Mammary epithelial cell (primary cell): ENCODE measurements at regions of chr2 and their contacts with region 1.

Region 1: GRCh38 chr2:187842978-187843847 is 289.0 kb upstream of the TFPI start:
- DNase-seq: peak; percentile 35
- H3K4me3 ChIP-seq: no peak overlapping the region
- H3K27ac ChIP-seq: no peak overlapping the region
- H3K4me1 ChIP-seq: no peaks in the 10 kb centered on the region
- H3K27me3 ChIP-seq: no peaks in the 10 kb centered on the region
- CTCF ChIP-seq: peak; percentile 46 to 67

Region 2: GRCh38 chr2:187581125-187581896 is 261.9 kb before region 1 on chr2:
- CTCF ChIA-PET with region 1: no interaction called
- dilution Hi-C with region 1: loop called (anchors 5 kb)
- in situ Hi-C with region 1: loop called in 1 of 2 experiments (anchors 25 kb)
- intact Hi-C with region 1: loop called (anchors 1 kb)
- DNase-seq: peak; percentile 27
- H3K4me3 ChIP-seq: peak overlapping the region in 1 of 3 experiments; percentile 40
- H3K27ac ChIP-seq: no peak overlapping the region
- H3K4me1 ChIP-seq: peaks cover 4% of the 10 kb centered on the region
- H3K27me3 ChIP-seq: peaks cover 2% of the 10 kb centered on the region
- CTCF ChIP-seq: peak; percentile 55 to 62

Region 3: GRCh38 chr2:187658952-187659525 is 184.2 kb before region 1 on chr2:
- CTCF ChIA-PET with region 1: no interaction called
- dilution Hi-C with region 1: no loop called
- in situ Hi-C with region 1: no loop called
- intact Hi-C with region 1: loop called (anchors 2 kb)
- DNase-seq: peak; percentile 4
- H3K4me3 ChIP-seq: no peak overlapping the region
- H3K27ac ChIP-seq: no peak overlapping the region
- H3K4me1 ChIP-seq: no peaks in the 10 kb centered on the region
- H3K27me3 ChIP-seq: no peaks in the 10 kb centered on the region
- CTCF ChIP-seq: peak; percentile 19 to 57

Region 4: GRCh38 chr2:187942876-187943275 is 99.7 kb after region 1 on chr2:
- CTCF ChIA-PET with region 1: no interaction called
- dilution Hi-C with region 1: no loop called
- in situ Hi-C with region 1: no loop called
- intact Hi-C with region 1: no loop called
- DNase-seq: no peak
- H3K4me3 ChIP-seq: no peak overlapping the region
- H3K27ac ChIP-seq: no peak overlapping the region
- H3K4me1 ChIP-seq: no peaks in the 10 kb centered on the region
- H3K27me3 ChIP-seq: no peaks in the 10 kb centered on the region
- CTCF ChIP-seq: no peak

Region 5: DNA sequence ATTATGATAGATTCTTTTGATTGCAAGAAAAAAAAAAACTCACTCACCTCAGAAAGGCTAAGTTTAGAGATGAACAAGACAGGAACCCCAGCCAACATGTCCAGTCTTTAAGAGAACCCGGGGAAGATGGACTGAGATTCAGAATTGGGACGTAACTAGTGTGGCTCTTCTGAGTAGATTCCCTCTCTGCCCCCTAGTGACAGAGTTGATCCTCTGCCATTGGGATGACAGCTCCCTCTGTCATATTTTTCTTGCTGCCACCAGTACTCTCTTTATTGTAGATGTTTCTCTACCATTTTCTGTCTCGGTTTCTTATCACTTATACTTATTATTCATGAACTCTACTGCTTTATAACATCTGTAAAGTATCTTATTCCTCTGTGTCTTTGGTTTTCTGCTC is 526.2 kb after region 1 on chr2:
- CTCF ChIA-PET with region 1: no interaction called
- dilution Hi-C with region 1: no loop called
- in situ Hi-C with region 1: no loop called
- intact Hi-C with region 1: loop called (anchors 5 kb)
- DNase-seq: peak; percentile 56
- H3K4me3 ChIP-seq: no peak overlapping the region
- H3K27ac ChIP-seq: no peak overlapping the region
- H3K4me1 ChIP-seq: no peaks in the 10 kb centered on the region
- H3K27me3 ChIP-seq: no peaks in the 10 kb centered on the region
- CTCF ChIP-seq: peak; percentile 64 to 85

Region 6: GRCh38 chr2:188512456-188512855 is 669.2 kb after region 1 on chr2:
- CTCF ChIA-PET with region 1: no interaction called
- dilution Hi-C with region 1: no loop called
- in situ Hi-C with region 1: no loop called
- intact Hi-C with region 1: loop called (anchors 2 kb)
- DNase-seq: peak; percentile 25
- H3K4me3 ChIP-seq: no peak overlapping the region
- H3K27ac ChIP-seq: no peak overlapping the region
- H3K4me1 ChIP-seq: no peaks in the 10 kb centered on the region
- H3K27me3 ChIP-seq: no peaks in the 10 kb centered on the region
- CTCF ChIP-seq: peak; percentile 44 to 59

Region 7: GRCh38 chr2:189060096-189060652 is 1217.0 kb after region 1 on chr2:
- CTCF ChIA-PET with region 1: interaction called, 14 read pairs
- dilution Hi-C with region 1: no loop called
- in situ Hi-C with region 1: no loop called
- intact Hi-C with region 1: no loop called
- DNase-seq: no peak
- H3K4me3 ChIP-seq: no peak overlapping the region
- H3K27ac ChIP-seq: no peak overlapping the region
- H3K4me1 ChIP-seq: no peaks in the 10 kb centered on the region
- H3K27me3 ChIP-seq: no peaks in the 10 kb centered on the region
- CTCF ChIP-seq: no peak